T-cell (primary cell): ENCODE measurements at regions of chr7 and their contacts with region 1.

Region 1: DNA sequence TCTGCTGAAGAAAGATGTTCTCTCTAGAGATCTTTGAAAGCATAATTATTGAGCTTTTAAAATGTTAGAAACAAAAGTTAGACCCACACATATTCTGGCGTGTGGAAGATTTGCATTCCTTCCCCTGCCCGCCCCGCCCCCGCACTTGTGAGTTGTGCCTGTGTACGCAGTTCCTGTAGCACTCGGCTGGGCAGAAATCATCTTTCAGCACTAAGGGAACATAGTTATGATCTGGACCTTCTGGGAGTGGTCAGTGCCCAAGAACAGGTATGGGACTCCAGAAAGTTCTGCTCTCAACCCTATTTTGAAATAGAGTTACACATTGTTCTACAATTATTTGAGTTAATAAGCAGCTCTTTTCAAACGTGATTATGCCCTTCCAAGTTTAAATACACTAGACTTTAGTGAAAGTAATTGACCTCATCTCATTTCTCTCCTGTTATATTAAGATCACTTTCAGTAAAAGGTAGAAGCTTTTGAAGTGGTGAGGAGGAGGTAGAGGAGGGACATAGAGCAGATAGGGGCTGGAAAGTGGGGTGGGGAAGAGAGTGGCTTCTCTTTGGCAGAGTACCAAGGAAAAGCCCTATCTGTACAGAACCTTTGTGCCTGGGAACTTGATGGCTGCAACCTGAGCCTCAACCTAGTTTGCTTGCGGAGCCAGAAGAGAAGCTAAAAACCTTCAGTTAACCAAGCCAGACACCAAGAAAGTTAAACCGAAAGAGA is 5.7 kb downstream of the BLVRA start:
- DNase-seq: peak in 21 of 35 experiments; percentile 9 to 45 (median 25)
- ATAC-seq: peak; percentile 23 to 53 (median 51)
- H3K4me3 ChIP-seq: no peak overlapping the region
- H3K4me3 Mint-ChIP-seq: peak overlapping the region; percentile 21 to 62 (median 35)
- H3K27ac ChIP-seq: no peak overlapping the region
- H3K27ac Mint-ChIP-seq: peak overlapping the region; percentile 52 to 55
- H3K4me1 ChIP-seq: peaks cover 2 to 6% of the 10 kb centered on the region in 2 experiments
- H3K4me1 Mint-ChIP-seq: peaks cover 34 to 47% (median 47%) of the 10 kb centered on the region in 3 donors
- H3K27me3 ChIP-seq: no peaks in the 10 kb centered on the region
- H3K27me3 Mint-ChIP-seq: no peaks in the 10 kb centered on the region

Region 2: DNA sequence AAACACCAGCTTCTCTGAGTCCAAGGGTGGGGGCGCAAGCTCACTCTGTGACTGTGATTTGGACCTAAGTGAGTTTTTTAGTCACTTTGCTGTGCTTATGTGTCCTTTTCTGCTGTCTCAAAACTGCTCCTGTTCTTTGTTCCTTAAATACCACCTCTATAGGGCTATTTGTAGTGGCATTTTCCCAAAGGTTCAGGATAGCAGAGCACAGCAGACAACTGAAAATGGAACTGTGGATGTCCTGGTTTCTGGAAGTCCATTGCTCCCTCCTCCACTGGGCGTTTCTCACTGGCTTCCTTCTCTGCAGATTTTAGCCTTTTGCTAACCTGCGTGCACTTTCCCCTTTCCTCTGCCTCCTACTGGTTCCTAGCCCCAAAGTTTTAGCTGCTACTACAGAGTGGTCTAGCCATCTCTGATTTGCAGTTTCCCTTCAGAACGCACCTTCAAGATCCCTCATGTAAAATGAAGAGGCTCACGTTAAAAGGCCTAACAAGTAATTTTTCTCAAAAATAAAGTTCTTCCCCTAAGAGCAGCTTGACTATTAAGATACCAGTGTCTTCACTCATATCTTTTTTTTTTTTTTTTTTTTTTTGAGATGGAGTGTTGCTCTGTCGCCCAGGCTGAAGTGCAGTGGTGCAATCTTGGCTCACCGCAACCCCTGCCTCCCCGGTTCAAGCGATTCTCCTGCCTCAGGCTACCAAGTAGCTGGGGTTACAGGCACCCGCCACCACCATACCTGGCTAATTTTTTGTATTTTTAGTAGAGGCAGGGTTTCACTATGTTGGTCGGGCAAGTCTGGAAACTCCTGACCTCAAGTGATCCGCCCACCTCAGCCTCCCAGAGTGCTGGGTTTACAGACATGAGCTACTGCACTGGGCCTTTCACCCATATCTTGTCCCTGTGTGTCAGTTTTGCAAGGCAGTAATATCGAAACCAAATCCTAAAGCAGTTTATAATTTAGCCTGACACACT is 20.1 kb after region 1 on chr7:
- CTCF ChIA-PET with region 1: no interaction called
- POLR2A ChIA-PET with region 1: interaction called in 1 of 2 experiments, 11 read pairs
- DNase-seq: peak in 1 of 35 experiments; percentile 9
- ATAC-seq: no peak
- H3K4me3 ChIP-seq: no peak overlapping the region
- H3K4me3 Mint-ChIP-seq: no peak overlapping the region
- H3K27ac ChIP-seq: no peak overlapping the region
- H3K27ac Mint-ChIP-seq: peak overlapping the region in 1 of 2 donors; percentile 34
- H3K4me1 ChIP-seq: peaks cover 0 to 3% of the 10 kb centered on the region in 2 experiments
- H3K4me1 Mint-ChIP-seq: peaks cover 2 to 32% (median 6%) of the 10 kb centered on the region in 3 donors
- H3K27me3 ChIP-seq: no peaks in the 10 kb centered on the region
- H3K27me3 Mint-ChIP-seq: no peaks in the 10 kb centered on the region

Region 3: DNA sequence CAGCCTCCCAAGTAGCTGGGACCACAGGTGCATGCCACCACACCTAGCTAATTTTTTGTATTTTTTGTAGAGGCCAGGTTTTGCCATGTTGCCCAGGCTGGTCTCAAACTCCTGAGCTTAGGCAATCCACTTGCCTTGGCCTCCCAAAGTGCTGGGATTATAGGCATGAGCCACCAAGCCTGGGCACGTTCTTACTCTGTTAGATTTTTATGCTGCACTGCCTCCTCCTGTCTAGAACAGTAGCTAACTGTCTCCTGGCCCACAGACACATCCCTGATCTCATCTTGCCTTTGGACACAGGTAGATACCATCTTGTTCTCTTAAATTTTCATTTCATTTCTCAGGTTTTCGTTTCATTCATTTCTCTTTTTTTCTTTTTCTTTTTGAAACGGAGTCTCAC is 35.4 kb after region 1 on chr7:
- CTCF ChIA-PET with region 1: no interaction called
- POLR2A ChIA-PET with region 1: interaction called, 5 to 10 read pairs
- DNase-seq: no peak
- ATAC-seq: peak in 1 of 4 experiments; percentile 43
- H3K4me3 ChIP-seq: no peak overlapping the region
- H3K4me3 Mint-ChIP-seq: no peak overlapping the region
- H3K27ac ChIP-seq: no peak overlapping the region
- H3K27ac Mint-ChIP-seq: no peak overlapping the region
- H3K4me1 ChIP-seq: no peaks in the 10 kb centered on the region
- H3K4me1 Mint-ChIP-seq: no peaks in the 10 kb centered on the region
- H3K27me3 ChIP-seq: no peaks in the 10 kb centered on the region
- H3K27me3 Mint-ChIP-seq: no peaks in the 10 kb centered on the region